ENCODE measurements at regions of chr6 and their contacts with region 1.

Region 1: GRCh38 chr6:42864602-42865001 is 14.8 kb upstream of the RPL7L1 start:
- DNase-seq: no peak
- ATAC-seq: no peak
- H3K4me3 ChIP-seq: no peak overlapping the region
- H3K27ac ChIP-seq: no peak overlapping the region
- H3K4me1 ChIP-seq: no peaks in the 10 kb centered on the region
- H3K27me3 ChIP-seq: no peaks in the 10 kb centered on the region
- CTCF ChIP-seq: no peak
- POLR2A ChIP-seq: no peak
- RAD21 ChIP-seq: no peak

Region 2: GRCh38 chr6:42661540-42662153 is 203.0 kb before region 1 on chr6:
- CTCF ChIA-PET with region 1: no interaction called
- POLR2A ChIA-PET with region 1: no interaction called
- dilution Hi-C with region 1: loop called (anchors 25 kb)
- in situ Hi-C with region 1: no loop called
- intact Hi-C with region 1: no loop called
- DNase-seq: peak; percentile 62
- ATAC-seq: peak; percentile 94
- H3K4me3 ChIP-seq: no peak overlapping the region
- H3K27ac ChIP-seq: no peak overlapping the region
- H3K4me1 ChIP-seq: no peaks in the 10 kb centered on the region
- H3K27me3 ChIP-seq: no peaks in the 10 kb centered on the region
- CTCF ChIP-seq: peak; percentile 87
- POLR2A ChIP-seq: 0 out of 2 replicates have a peak, but pooled peaks have one; percentile 29
- RAD21 ChIP-seq: peak; percentile 88

Region 3: DNA sequence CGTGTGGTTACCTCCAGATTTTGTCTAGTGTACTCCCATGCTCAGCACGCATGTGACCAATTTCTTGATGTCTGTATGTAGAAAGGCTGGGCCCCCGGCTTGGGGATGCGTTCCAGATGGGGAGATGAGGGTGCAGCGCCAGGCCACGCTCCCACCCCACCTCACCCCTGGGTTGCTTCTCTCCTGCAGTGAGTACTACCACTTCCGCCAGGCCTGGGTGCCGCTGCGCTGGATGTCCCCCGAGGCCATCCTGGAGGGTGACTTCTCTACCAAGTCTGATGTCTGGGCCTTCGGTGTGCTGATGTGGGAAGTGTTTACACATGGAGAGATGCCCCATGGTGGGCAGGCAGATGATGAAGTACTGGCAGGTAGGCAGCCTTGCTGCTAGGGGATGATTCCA is 295.0 kb after region 1 on chr6:
- CTCF ChIA-PET with region 1: no interaction called
- POLR2A ChIA-PET with region 1: no interaction called
- dilution Hi-C with region 1: no loop called
- in situ Hi-C with region 1: no loop called
- intact Hi-C with region 1: no loop called
- DNase-seq: no peak
- ATAC-seq: no peak
- H3K4me3 ChIP-seq: no peak overlapping the region
- H3K27ac ChIP-seq: no peak overlapping the region
- H3K4me1 ChIP-seq: no peaks in the 10 kb centered on the region
- H3K27me3 ChIP-seq: no peaks in the 10 kb centered on the region
- CTCF ChIP-seq: no peak
- POLR2A ChIP-seq: no peak
- RAD21 ChIP-seq: no peak

Region 4: GRCh38 chr6:43170417-43171283 is 306.0 kb after region 1 on chr6 and contains the start of gene SRF:
- CTCF ChIA-PET with region 1: no interaction called
- POLR2A ChIA-PET with region 1: no interaction called
- dilution Hi-C with region 1: no loop called
- in situ Hi-C with region 1: no loop called
- intact Hi-C with region 1: no loop called
- DNase-seq: peak; percentile 99
- ATAC-seq: peak; percentile 67
- H3K4me3 ChIP-seq: peak within 1 kb of the TSS; percentile 73
- H3K27ac ChIP-seq: peak within 1 kb of the TSS; percentile 97
- H3K4me1 ChIP-seq: peaks cover 12% of the 10 kb centered on the region
- H3K27me3 ChIP-seq: no peaks in the 10 kb centered on the region
- CTCF ChIP-seq: no peak
- POLR2A ChIP-seq: peak; percentile 56; the same call in 1 of the 2 replicates
- RAD21 ChIP-seq: no peak; the same call in 1 of the 2 replicates
- total RNA-seq, gene SRF: 20.6 TPM in 2 replicates

Measured in IMR-90 (cell line).